Dorsolateral prefrontal cortex (tissue), 120 donors: ENCODE measurements at regions of chr16 and their contacts with region 1.

Region 1: DNA sequence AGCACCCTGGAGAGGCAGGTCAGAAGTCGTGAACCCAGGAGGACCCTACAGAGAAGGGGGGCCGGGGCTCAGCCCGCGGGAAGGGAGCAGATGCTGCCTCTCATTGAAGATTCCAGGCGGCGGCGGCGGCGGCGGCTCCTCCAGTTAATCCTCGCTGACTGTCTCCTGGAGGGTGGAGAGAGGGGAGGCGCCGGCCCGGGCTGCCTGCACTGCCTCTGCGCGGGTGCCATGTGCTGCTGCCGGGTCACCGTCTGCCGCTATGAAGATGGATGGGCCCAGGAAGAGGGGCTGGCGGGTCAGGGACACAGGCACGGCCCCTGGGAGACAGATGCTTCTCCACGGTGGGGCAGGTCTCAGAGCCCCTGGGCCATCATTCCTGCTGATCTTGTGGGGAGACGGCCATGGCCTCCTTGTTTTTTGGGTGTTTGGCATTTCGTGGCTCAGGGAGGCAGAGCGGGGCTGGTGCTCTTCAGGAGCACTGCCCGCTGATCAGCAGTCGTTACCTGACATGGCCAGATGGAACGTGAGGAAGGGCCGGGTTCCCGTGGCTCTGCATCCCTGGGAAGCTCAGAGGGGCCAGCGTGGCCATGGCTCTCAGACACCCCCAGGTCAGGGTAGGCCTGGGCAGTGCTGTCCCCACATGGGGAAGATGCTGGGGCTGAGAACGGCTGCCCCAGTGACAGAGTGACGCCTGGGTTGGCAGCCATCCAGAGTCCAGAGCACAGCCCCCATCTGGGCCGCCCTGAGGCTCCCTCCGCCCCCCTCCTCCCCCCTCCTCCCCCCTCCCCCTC is 36.1 kb downstream of the GINS2 start:
- DNase-seq: peak; percentile 58 to 80 (median 73)
- H3K4me3 ChIP-seq: peak overlapping the region in 33 of 59 donors; percentile 1 to 52 (median 23)
- H3K27ac ChIP-seq: peak overlapping the region in 58 of 59 donors; percentile 14 to 95 (median 86)
- H3K27me3 ChIP-seq: no peaks in the 10 kb centered on the region
- CTCF ChIP-seq: peak in 2 of 56 donors; percentile 7 to 12

Region 2: GRCh38 chr16:85055503-85056210 is 597.0 kb before region 1 on chr16:
- intact Hi-C with region 1: no loop called
- DNase-seq: peak in 6 of 10 donors; percentile 47 to 74 (median 55)
- H3K4me3 ChIP-seq: peak overlapping the region in 47 of 59 donors; percentile 0 to 49 (median 26)
- H3K27ac ChIP-seq: peak overlapping the region in 55 of 59 donors; percentile 6 to 91 (median 69)
- H3K27me3 ChIP-seq: no peaks in the 10 kb centered on the region
- CTCF ChIP-seq: peak in 1 of 56 donors; percentile 9

Region 3: GRCh38 chr16:85275533-85276249 is 376.9 kb before region 1 on chr16:
- intact Hi-C with region 1: loop called in 1 of 2 experiments (anchors 5 kb)
- DNase-seq: peak in 9 of 10 donors; percentile 66 to 91 (median 77)
- H3K4me3 ChIP-seq: no peak overlapping the region
- H3K27ac ChIP-seq: peak overlapping the region in 2 of 59 donors; percentile 12 to 54
- H3K27me3 ChIP-seq: no peaks in the 10 kb centered on the region
- CTCF ChIP-seq: peak; percentile 62 to 98 (median 95)

Region 4: DNA sequence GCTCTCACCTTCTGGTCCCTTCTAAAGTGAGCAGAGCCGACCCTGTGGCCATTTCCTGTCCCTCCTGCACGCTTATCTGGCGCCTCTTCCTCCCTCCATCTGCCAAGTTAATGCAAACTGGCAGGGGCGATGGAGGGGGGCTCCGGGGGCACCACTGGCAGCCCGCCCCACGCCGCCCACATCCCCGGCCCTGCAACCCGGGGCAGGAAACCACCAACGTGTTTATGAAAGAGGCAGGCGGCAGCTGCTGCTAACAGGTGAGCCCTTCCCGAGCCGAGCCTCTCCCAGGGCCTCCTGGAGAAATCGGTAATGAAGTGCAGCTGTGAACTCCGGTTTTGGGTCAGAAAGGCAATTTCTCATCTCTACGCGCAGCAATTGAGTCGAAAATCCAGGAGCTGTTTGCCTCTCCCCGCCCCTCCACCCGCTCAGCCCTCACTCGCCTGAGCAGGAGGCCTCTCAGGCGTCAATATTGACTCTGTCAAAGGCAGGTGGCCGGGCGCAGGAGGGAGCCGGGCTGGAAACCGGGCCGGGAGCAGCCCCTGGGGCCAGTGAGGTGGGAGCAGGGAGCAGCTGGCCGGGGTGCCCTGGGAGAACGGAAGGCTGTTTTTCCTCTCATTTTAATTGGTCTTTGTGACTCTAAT is 203.9 kb before region 1 on chr16:
- intact Hi-C with region 1: no loop called
- DNase-seq: peak in 1 of 10 donors; percentile 30
- H3K4me3 ChIP-seq: no peak overlapping the region
- H3K27ac ChIP-seq: peak overlapping the region in 6 of 59 donors; percentile 2 to 57 (median 11)
- H3K27me3 ChIP-seq: no peaks in the 10 kb centered on the region
- CTCF ChIP-seq: no peak

Region 5: DNA sequence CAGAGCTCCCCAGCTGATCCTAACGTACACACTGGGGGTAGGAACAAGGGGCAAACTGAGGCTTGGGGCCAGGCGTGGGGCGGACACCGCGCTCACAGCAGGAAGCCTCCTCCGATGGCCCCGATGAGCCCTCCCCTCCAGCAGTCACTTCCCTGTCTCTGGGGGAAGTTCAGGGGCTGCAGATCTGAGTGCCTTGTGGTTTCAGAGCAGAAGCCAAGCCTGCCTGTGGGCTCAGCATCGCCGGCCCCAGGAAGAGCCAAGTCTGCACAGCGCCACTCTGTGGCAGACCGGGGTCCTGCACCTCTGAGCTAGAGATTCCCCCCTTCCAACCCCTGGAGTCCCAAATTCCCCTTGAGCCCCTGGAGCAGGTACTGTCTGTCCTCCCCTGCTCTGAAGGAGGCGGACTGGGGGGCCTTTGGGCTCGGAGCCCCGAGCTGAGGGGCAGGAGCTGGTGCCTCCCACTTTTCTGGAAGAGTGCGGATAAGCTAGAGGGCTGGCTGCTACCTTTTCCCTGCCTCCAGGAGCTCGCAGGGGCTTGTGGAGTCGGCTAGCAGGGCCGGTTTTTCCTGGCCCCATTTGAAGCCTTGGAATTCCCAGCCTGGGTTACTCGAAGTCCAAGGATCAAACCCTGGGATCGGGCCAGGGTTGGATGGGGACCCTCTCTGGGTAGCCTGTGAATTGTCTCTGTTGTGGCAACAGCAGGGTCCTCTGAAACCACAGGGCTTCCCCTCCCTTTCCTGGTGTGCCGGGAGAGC is 36.6 kb before region 1 on chr16:
- intact Hi-C with region 1: loop called in 1 of 2 experiments (anchors 2 kb)
- DNase-seq: peak in 9 of 10 donors; percentile 60 to 83 (median 71)
- H3K4me3 ChIP-seq: peak overlapping the region in 30 of 59 donors; percentile 2 to 40 (median 22)
- H3K27ac ChIP-seq: peak overlapping the region in 47 of 59 donors; percentile 3 to 85 (median 53)
- H3K27me3 ChIP-seq: no peaks in the 10 kb centered on the region
- CTCF ChIP-seq: peak; percentile 61 to 90 (median 80)